Activated B cell treated with CpG ODN at 0.5 μM for 24 hours (primary cell): ENCODE measurements at regions of chr9 and their contacts with region 1.

Region 1: DNA sequence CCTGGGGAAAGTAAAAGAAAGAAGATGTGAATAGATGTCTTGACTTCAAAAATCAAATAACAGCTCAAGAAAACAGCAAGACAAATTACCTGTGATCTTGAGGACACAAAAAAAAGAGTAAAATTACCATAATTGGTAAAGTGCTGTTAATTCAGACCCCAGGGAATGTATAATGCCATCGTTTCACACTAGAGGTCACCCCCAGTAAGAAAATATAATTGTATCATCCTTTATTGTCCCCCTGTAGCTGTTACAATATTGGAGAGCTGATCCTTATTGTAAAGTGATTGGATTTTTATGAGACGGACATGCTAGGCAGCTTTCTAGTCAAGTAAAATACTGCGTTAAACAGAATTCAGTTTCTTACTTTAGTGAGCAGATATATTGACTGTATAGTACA is 377.0 kb downstream of the TLE1 start:
- DNase-seq: no peak
- ATAC-seq: no peak
- H3K4me3 Mint-ChIP-seq: no peak overlapping the region
- H3K27ac Mint-ChIP-seq: no peak overlapping the region
- H3K4me1 Mint-ChIP-seq: no peaks in the 10 kb centered on the region
- H3K27me3 Mint-ChIP-seq: no peaks in the 10 kb centered on the region
- CTCF ChIP-seq: no peak

Region 2: GRCh38 chr9:81146656-81147337 is 165.5 kb before region 1 on chr9:
- CTCF ChIA-PET with region 1: no interaction called
- POLR2A ChIA-PET with region 1: no interaction called
- intact Hi-C with region 1: no loop called
- DNase-seq: no peak
- ATAC-seq: no peak
- H3K4me3 Mint-ChIP-seq: no peak overlapping the region
- H3K27ac Mint-ChIP-seq: no peak overlapping the region
- H3K4me1 Mint-ChIP-seq: no peaks in the 10 kb centered on the region
- H3K27me3 Mint-ChIP-seq: no peaks in the 10 kb centered on the region
- CTCF ChIP-seq: no peak

Region 3: GRCh38 chr9:81292056-81292735 is 20.1 kb before region 1 on chr9:
- CTCF ChIA-PET with region 1: no interaction called
- POLR2A ChIA-PET with region 1: no interaction called
- intact Hi-C with region 1: no loop called
- DNase-seq: no peak
- ATAC-seq: no peak
- H3K4me3 Mint-ChIP-seq: no peak overlapping the region
- H3K27ac Mint-ChIP-seq: no peak overlapping the region
- H3K4me1 Mint-ChIP-seq: no peaks in the 10 kb centered on the region
- H3K27me3 Mint-ChIP-seq: no peaks in the 10 kb centered on the region
- CTCF ChIP-seq: no peak

Region 4: DNA sequence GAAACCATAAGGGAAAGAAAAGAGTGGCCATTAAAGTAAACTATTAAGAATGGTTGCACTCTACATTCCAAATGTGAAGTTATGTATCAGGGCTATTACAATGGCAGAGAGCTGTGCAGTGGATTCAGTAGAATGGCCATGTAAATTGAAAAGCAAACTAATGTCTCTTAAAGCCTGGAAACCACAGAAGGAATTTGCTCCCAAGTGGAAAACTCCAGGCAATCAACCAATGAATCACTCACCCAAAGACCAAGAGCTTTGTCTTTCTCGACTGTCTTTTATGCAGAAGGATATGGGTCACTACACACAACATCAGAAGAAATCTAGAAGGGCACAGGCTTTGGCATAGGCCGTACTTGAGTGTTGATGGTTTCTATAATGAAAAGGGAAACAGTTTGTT is 262.1 kb after region 1 on chr9:
- CTCF ChIA-PET with region 1: no interaction called
- POLR2A ChIA-PET with region 1: no interaction called
- intact Hi-C with region 1: no loop called
- DNase-seq: no peak
- ATAC-seq: no peak
- H3K4me3 Mint-ChIP-seq: no peak overlapping the region
- H3K27ac Mint-ChIP-seq: no peak overlapping the region
- H3K4me1 Mint-ChIP-seq: peaks cover 6% of the 10 kb centered on the region
- H3K27me3 Mint-ChIP-seq: no peaks in the 10 kb centered on the region
- CTCF ChIP-seq: no peak

Region 5: DNA sequence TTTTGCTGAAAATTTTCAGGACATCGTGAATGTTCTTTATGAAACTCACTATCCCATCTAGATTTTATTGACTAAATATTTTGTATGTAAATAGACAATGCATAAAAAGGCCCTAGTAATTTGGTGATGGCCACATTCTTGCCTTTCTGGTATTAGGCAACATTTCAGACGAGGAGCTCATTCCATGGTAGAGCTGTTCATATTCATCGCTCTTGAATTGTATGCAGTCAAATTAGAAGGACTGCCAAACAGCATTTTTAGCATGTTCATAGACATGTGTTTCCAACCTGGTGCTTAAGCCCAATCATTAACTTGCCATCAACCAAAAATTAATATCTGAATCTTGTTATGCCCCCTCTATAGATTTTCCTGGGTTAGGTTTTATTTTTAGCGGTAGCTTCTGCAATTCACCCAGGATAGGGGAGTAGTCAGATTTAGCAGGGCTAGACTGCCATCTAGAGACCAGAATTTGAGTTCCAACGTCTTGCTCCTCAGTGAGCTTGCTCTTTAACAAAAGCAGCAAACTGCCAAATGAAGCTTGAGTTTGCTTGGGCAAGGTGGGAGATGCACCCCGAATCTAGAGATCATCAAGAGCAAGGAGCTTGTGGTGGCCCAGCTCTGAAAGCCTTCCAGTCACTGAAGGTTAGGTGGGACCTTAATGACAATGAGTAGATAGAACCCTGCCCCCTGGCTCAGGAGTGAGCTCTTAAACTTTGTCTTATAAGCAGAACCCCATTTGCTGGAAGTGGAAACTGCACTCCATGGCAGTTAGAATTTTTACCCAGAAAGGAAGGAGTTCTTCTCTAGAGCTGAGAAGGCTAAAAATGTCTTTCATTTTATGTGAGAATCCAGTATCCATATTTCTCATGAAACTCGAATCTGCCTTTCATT is 1294.4 kb after region 1 on chr9:
- CTCF ChIA-PET with region 1: interaction called, 4 read pairs
- POLR2A ChIA-PET with region 1: no interaction called
- intact Hi-C with region 1: loop called (anchors 5 kb)
- DNase-seq: no peak
- ATAC-seq: peak; percentile 45
- H3K4me3 Mint-ChIP-seq: no peak overlapping the region
- H3K27ac Mint-ChIP-seq: no peak overlapping the region
- H3K4me1 Mint-ChIP-seq: no peaks in the 10 kb centered on the region
- H3K27me3 Mint-ChIP-seq: no peaks in the 10 kb centered on the region
- CTCF ChIP-seq: peak; percentile 75